K562 (cell line): ENCODE measurements at regions of chrX and their contacts with region 1.

Region 1: GRCh38 chrX:150683536-150684146 is 9.6 kb upstream of the MTMR1 start:
- DNase-seq: peak; percentile 26 to 66 (median 34)
- ATAC-seq: peak; percentile 83
- H3K4me3 ChIP-seq: no peak overlapping the region
- H3K27ac ChIP-seq: no peak overlapping the region
- H3K4me1 ChIP-seq: no peaks in the 10 kb centered on the region
- H3K27me3 ChIP-seq: no peaks in the 10 kb centered on the region
- CTCF ChIP-seq: peak; percentile 50 to 66 (median 56)
- EP300 ChIP-seq: no peak
- POLR2A ChIP-seq: no peak
- RAD21 ChIP-seq: peak; percentile 7 to 57; a peak in 2 of 4 replicates

Region 2: GRCh38 chrX:149950681-149951080 is 733.0 kb before region 1 on chrX:
- CTCF ChIA-PET with region 1: interaction called, 3 read pairs
- POLR2A ChIA-PET with region 1: no interaction called
- in situ Hi-C with region 1: no loop called
- intact Hi-C with region 1: loop called (anchors 10 kb)
- DNase-seq: peak; percentile 12 to 48 (median 24)
- ATAC-seq: peak; percentile 69; the same call in 2 of the 3 replicates
- H3K4me3 ChIP-seq: no peak overlapping the region
- H3K27ac ChIP-seq: no peak overlapping the region
- H3K4me1 ChIP-seq: no peaks in the 10 kb centered on the region
- H3K27me3 ChIP-seq: no peaks in the 10 kb centered on the region
- CTCF ChIP-seq: peak; percentile 31 to 61 (median 45); a peak in 5 of 6 replicates
- EP300 ChIP-seq: no peak
- POLR2A ChIP-seq: no peak
- RAD21 ChIP-seq: peak; percentile 24 to 53; a peak in 3 of 4 replicates

Region 3: DNA sequence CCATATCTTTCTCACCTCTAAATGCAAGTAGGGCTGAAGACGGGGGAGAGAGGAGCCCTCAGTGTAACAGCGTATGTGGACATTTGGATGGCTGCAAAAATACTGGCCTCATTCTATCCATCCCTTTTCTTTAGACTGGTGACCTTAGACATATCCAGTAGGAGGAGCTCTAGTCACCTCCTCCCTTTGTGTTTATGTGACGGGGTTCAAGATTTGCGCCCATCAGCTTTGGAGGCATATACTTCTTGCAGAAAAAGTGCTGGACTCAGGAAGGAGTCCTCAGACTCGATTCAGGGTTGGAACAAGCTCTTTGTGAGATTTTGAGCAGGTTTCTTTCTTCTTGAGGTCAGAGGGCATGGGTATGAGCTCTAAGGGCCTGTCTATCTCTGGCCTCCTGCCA is 234.3 kb before region 1 on chrX:
- CTCF ChIA-PET with region 1: no interaction called
- POLR2A ChIA-PET with region 1: no interaction called
- in situ Hi-C with region 1: no loop called
- intact Hi-C with region 1: loop called (anchors 10 kb)
- DNase-seq: peak in 2 of 4 experiments; percentile 14 to 20
- ATAC-seq: peak; percentile 75
- H3K4me3 ChIP-seq: no peak overlapping the region
- H3K27ac ChIP-seq: no peak overlapping the region
- H3K4me1 ChIP-seq: no peaks in the 10 kb centered on the region
- H3K27me3 ChIP-seq: no peaks in the 10 kb centered on the region
- CTCF ChIP-seq: peak; percentile 49 to 58 (median 50); a peak in 4 of 6 replicates
- EP300 ChIP-seq: no peak
- POLR2A ChIP-seq: no peak
- RAD21 ChIP-seq: peak; percentile 31 to 68; a peak in 3 of 4 replicates

Region 4: GRCh38 chrX:150544222-150544787 is 139.3 kb before region 1 on chrX:
- CTCF ChIA-PET with region 1: no interaction called
- POLR2A ChIA-PET with region 1: no interaction called
- in situ Hi-C with region 1: no loop called
- intact Hi-C with region 1: loop called (anchors 2 kb)
- DNase-seq: peak in 2 of 4 experiments; percentile 20 to 36
- ATAC-seq: peak; percentile 74
- H3K4me3 ChIP-seq: no peak overlapping the region
- H3K27ac ChIP-seq: no peak overlapping the region
- H3K4me1 ChIP-seq: peaks cover 4 to 10% of the 10 kb centered on the region in 2 experiments; a peak in 3 of 5 replicates
- H3K27me3 ChIP-seq: peaks cover 0 to 4% of the 10 kb centered on the region in 2 experiments; a peak in 2 of 5 replicates
- CTCF ChIP-seq: peak; percentile 11 to 44 (median 31); a peak in 2 of 6 replicates
- EP300 ChIP-seq: no peak
- POLR2A ChIP-seq: no peak
- RAD21 ChIP-seq: peak; percentile 22 to 53; a peak in 3 of 4 replicates

Region 5: DNA sequence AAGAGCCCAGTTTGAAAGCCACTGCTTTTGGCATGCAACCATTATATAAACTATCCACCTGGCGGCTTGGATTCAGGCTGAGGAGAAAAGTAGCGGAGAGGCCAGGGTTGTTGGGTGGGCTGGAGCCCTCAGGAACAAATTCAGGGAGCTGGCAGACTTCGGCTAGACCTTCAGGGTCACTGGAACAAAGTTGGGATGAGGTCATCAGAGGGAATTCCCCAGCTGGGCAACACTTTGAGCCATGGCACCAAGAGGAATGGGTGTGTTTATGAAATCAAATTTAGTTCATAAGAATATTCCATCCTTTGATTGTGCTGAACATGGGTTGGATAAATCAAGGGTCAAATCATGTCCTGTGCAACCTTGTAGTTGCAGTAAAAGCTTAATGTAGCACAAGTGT is 31.5 kb after region 1 on chrX:
- CTCF ChIA-PET with region 1: interaction called, 3 read pairs
- POLR2A ChIA-PET with region 1: no interaction called
- in situ Hi-C with region 1: no loop called
- intact Hi-C with region 1: loop called (anchors 2 kb)
- DNase-seq: no peak
- ATAC-seq: no peak
- H3K4me3 ChIP-seq: no peak overlapping the region
- H3K27ac ChIP-seq: no peak overlapping the region
- H3K4me1 ChIP-seq: no peaks in the 10 kb centered on the region
- H3K27me3 ChIP-seq: no peaks in the 10 kb centered on the region
- CTCF ChIP-seq: no peak
- EP300 ChIP-seq: no peak
- POLR2A ChIP-seq: no peak
- RAD21 ChIP-seq: no peak